ENCODE measurements at regions of chr13 and their contacts with region 1.

Region 1: GRCh38 chr13:59391696-59392095 is 772.0 kb downstream of the DIAPH3 start:
- DNase-seq: no peak
- ATAC-seq: peak; percentile 59

Region 2: DNA sequence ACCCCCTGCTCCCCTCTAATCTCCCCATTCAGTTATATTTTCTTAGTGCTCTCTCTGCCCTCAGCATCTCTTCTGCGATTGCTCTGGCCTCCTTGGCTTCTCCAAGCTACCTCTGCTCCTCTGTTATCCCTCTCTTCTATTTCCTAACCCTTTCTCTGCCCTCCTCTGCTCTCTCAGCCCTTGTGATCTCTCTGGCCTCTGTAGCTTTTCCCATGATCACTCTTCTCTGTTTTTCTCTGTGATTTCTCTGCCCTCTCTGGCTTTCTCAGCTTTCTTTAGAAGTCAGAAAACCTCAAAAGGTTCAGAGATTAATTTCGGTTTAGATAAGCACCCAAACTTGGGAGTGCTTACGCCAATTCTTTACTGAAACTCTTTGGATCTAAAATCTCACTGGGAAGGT is 23.0 kb before region 1 on chr13:
- intact Hi-C with region 1: loop called (anchors 2 kb)
- DNase-seq: no peak
- ATAC-seq: peak; percentile 68

Region 3: DNA sequence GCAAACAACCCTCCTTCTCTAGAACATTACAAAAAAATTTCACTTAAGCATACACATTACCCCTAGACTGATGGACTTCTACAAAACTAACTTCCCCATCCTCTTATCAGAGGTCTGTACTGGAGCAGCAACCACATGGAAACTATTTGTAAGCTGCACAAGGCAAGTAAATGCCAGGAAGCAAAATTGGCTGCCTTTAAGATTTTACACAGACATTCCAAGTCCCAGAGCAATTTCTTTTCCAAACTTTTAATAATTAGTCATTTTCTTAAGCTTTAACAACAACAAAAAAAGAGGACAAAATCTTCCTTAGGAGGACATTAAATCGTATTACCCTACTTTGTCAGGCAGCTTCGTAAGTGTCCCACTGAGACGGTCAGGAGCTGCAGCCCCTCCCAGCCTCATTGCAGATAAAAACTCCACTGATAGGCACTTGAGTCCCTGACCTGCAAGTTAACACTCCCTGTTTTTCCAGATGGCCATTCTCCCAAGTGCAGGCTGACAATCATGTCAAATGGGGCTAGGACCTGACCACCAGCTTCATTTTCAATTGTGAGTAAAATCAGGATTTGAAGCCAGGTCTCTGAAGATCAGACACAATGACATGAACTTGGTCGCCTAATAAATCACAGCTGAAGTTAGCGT is 91.9 kb after region 1 on chr13:
- intact Hi-C with region 1: loop called (anchors 5 kb)
- DNase-seq: peak; percentile 50
- ATAC-seq: peak; percentile 81

Region 4: DNA sequence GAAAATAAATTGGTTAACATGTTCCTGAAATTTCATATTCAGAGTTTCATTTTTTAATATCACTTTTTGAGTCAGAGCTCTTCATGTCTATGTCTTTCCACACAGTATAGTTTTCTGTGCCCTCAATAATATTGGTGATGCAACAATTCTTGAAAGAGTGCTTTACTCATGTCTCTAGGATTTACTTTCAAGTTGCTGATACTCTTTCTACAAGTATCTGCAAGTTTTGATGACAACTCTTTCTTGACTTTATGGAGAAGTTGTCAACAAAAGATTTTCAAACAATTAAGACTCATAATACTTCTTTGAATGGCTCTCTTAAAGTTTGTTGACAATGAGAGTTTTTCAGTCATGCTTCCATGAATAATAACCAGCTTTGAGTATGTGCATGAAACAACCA is 210.3 kb after region 1 on chr13:
- intact Hi-C with region 1: no loop called
- DNase-seq: no peak
- ATAC-seq: no peak

Region 5: DNA sequence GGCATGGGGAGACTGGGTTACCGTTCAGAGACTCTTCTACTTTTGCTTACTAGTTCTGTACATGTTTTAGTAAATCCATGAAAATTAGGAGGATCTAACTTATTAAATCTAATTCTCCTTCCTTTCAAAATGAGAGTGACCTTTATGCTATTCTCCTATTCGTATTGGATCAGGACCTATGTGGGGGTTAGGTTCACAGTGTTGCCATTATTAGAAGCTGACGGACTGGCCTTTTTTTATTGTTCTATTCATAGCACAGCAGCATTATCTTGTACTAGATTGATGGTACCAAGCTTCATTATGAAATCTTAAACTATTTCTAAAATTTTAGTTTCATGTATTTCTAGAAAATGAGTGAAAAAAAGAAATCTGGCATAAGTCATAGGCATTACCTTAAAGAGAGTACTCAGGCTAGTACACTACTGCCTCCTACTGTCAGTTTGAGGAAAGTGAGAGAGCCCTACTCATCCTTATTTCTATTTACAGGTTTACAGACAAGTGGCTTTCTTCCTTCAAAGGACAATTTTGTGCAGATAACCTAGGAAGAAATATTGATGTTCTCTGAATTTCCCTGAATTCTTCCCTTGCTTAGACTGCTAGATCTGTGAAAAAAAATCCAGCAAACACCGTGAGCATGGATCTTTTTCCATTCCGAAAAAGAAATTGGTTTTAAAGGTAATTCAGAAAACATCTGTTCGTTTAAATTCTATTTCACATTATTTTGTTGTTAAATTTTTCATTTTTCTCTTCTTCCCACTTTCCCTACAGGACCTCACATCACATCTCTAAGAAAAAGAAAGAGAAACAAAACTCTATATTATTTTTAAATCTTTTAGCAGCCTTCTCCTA is 286.5 kb after region 1 on chr13:
- intact Hi-C with region 1: loop called (anchors 2 kb)
- DNase-seq: no peak
- ATAC-seq: peak; percentile 70

Region 6: DNA sequence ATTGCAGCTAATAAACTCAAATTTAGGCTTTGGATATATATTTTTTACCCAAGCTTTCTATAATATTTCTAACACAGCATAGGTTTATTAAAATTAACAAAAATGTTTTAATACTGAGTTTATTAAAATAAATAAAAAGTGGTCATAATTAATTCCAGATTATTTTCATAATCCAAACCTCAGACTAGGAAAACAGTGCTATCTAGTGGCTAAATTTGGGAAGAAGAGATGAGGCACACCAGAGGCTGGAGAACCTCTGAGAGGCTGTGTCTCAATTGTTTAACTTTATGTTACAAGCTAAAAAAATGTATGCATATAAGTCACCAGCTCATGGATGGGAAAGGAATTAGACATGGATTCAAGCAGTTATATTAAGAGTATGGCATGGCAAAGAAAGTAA is 379.6 kb after region 1 on chr13:
- intact Hi-C with region 1: loop called (anchors 5 kb)
- DNase-seq: no peak
- ATAC-seq: no peak

Region 7: GRCh38 chr13:60431108-60431700 is 1039.5 kb after region 1 on chr13:
- intact Hi-C with region 1: loop called (anchors 10 kb)
- DNase-seq: no peak
- ATAC-seq: peak; percentile 62